IMR-90 (cell line): ENCODE measurements at regions of chr2 and their contacts with region 1.

Region 1: GRCh38 chr2:85420536-85421259 is 2.2 kb downstream of the SH2D6 start:
- DNase-seq: peak; percentile 77
- ATAC-seq: peak; percentile 77
- H3K4me3 ChIP-seq: no peak overlapping the region
- H3K27ac ChIP-seq: peak overlapping the region; percentile 85
- H3K4me1 ChIP-seq: peaks cover 23% of the 10 kb centered on the region
- H3K27me3 ChIP-seq: no peaks in the 10 kb centered on the region
- CTCF ChIP-seq: peak; percentile 97
- POLR2A ChIP-seq: no peak; the same call in 1 of the 2 replicates
- RAD21 ChIP-seq: peak; percentile 100

Region 2: DNA sequence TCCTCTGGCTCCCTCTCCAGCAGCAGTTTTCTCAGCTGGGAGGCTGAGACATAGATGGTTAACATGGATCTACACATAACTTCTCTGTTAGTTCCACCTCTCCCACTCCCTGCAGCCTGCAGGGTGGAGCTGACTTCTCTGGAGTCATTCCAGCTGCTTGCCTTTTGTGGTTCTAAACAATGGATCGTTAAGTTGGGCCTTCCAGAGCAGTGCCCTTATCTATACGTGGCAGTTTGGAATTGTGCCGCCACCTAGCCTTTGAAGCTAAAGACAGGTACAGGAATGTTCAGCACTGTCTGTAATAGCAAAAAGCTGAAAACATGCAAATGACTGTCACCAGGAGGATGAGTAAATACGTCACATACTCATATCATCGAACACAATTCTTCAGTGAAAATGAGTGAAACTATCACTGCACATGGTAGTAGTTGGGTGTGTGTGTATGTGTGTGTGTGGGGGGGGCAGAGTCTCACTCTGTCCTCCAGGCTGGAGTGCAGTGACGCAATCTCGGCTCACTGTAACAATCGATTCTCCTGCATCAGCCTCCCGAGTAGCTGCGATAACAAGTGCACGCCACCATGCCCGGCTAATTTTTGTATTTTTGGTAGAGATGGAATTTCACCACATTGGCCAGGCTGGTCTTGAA is 48.1 kb after region 1 on chr2:
- CTCF ChIA-PET with region 1: no interaction called
- POLR2A ChIA-PET with region 1: no interaction called
- dilution Hi-C with region 1: no loop called
- in situ Hi-C with region 1: no loop called
- intact Hi-C with region 1: loop called (anchors 1 kb)
- DNase-seq: peak; percentile 58
- ATAC-seq: peak; percentile 84
- H3K4me3 ChIP-seq: no peak overlapping the region
- H3K27ac ChIP-seq: no peak overlapping the region
- H3K4me1 ChIP-seq: peaks cover 6% of the 10 kb centered on the region; the same call in 1 of the 2 replicates
- H3K27me3 ChIP-seq: no peaks in the 10 kb centered on the region
- CTCF ChIP-seq: no peak
- POLR2A ChIP-seq: no peak
- RAD21 ChIP-seq: no peak

Region 3: DNA sequence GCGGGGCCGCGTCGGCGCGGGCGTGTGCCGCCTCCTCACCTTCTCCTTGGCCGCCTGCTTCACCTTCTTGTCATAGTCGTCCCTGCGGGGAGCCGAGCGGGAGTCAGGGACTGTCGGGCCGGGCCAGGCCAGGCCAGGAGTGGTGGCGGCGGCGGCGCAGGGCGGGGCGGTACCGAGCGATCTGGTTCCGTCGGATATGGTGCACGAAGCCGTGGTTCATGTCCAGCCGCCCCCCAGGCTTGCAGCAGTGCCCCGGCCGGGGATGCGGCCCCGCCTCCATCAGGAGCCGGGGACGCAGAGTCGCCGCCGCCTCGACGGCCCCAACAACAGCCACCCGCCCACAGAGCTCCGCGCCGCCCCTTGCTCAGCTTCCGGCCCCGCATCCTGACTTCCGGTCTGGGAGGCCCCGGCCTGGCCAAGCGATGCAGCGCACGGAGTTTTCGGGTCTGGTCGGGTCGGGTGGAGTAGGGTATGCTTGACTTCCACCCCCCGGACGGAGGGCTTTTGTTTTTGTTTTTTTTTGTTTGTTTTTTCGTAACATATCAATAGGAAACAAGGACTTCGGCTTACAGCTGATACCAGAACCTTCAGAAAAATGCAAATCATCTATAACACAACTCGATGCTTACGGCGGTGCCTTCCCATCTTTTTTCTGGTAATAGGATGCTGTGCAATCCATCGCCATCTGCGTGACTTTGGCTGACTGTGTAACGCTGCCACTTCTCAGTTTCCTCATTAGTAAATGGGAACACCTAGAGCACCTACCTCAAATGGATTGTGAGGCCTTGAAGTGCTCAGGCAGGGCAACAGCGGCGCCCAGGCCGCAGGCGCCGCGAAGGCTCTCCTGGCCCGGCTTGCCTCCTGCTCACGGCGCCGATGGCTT is 191.2 kb after region 1 on chr2 and contains the start of gene C2orf68:
- CTCF ChIA-PET with region 1: interaction called, 4 read pairs
- POLR2A ChIA-PET with region 1: no interaction called
- dilution Hi-C with region 1: no loop called
- in situ Hi-C with region 1: no loop called
- intact Hi-C with region 1: loop called (anchors 2 kb)
- DNase-seq: peak; percentile 79
- ATAC-seq: peak; percentile 80
- H3K4me3 ChIP-seq: peak within 1 kb of the TSS; percentile 83
- H3K27ac ChIP-seq: peak within 1 kb of the TSS; percentile 67
- H3K4me1 ChIP-seq: no peaks in the 10 kb centered on the region
- H3K27me3 ChIP-seq: no peaks in the 10 kb centered on the region
- CTCF ChIP-seq: no peak
- POLR2A ChIP-seq: peak; percentile 84
- RAD21 ChIP-seq: no peak
- total RNA-seq, gene C2orf68: 5.8 and 6.8 TPM in 2 replicates